Activated CD4-positive, alpha-beta T cell treated with anti-CD3 and anti-CD28 coated beads, Interleukin-2, amount 10 ng/mL, durations not matched to agents 24 days and 14 days (primary cell): ENCODE measurements at regions of chr6 and their contacts with region 1.

Region 1: DNA sequence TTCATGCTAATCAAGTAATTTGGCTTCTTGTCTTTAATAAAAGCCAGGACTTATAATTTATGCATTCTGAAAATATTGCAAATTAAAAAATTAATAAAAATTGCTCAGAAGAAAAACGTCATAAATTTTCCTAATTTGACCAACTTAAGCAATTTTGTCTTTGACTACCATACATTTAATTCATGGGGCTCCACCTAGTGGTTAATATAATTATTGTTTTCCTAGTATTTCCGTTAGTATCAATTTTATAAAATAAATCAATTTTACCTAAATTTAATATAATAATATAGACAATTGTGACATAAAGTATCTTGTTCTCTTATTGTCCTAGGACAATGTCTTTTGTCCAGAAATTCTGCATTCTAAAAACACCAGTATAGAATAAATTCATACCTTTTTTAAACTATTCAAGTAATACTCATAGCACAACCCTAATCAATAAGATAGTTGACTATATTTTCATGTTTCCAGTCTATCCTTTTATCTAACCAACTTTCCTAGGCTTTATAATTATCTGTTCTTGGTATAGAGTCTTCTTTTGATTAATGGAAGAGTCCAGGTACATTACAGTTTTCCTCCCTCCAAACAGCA is 319.9 kb downstream of the TRDN start:
- DNase-seq: no peak
- H3K4me3 Mint-ChIP-seq: no peak overlapping the region
- H3K27ac Mint-ChIP-seq: no peak overlapping the region
- H3K4me1 Mint-ChIP-seq: no peaks in the 10 kb centered on the region
- H3K27me3 Mint-ChIP-seq: no peaks in the 10 kb centered on the region

Region 2: GRCh38 chr6:122730775-122731386 is 585.9 kb before region 1 on chr6:
- intact Hi-C with region 1: loop called (anchors 2 kb)
- DNase-seq: peak; percentile 61
- H3K4me3 Mint-ChIP-seq: no peak overlapping the region
- H3K27ac Mint-ChIP-seq: no peak overlapping the region
- H3K4me1 Mint-ChIP-seq: no peaks in the 10 kb centered on the region
- H3K27me3 Mint-ChIP-seq: peaks cover 19% of the 10 kb centered on the region

Region 3: GRCh38 chr6:122869437-122870024 is 447.3 kb before region 1 on chr6:
- intact Hi-C with region 1: loop called (anchors 2 kb)
- DNase-seq: peak; percentile 58
- H3K4me3 Mint-ChIP-seq: no peak overlapping the region
- H3K27ac Mint-ChIP-seq: no peak overlapping the region
- H3K4me1 Mint-ChIP-seq: no peaks in the 10 kb centered on the region
- H3K27me3 Mint-ChIP-seq: no peaks in the 10 kb centered on the region

Region 4: DNA sequence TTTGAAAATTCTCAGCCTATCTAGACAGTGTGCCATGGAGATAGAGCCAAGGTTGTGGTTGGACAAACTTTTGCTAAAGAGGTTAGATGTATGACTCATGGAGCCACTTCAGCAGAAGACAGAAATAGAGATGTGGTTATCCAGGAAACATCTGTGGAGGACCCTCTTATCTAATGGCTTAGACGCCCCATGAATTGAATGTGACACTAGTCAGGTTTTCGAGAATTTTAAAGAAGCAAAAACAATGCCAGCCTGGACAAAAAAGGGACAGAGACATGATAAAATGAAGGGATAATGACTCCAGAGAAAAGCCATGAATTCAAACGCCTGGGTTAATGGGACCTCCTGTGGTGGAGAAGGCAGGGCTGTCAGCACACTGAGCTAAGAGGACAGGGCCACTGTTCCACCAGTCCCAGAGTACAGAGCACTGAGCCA is 40.3 kb before region 1 on chr6:
- intact Hi-C with region 1: no loop called
- DNase-seq: no peak
- H3K4me3 Mint-ChIP-seq: no peak overlapping the region
- H3K27ac Mint-ChIP-seq: no peak overlapping the region
- H3K4me1 Mint-ChIP-seq: no peaks in the 10 kb centered on the region
- H3K27me3 Mint-ChIP-seq: no peaks in the 10 kb centered on the region